ENCODE measurements at regions of chr22 and their contacts with region 1.

Region 1: DNA sequence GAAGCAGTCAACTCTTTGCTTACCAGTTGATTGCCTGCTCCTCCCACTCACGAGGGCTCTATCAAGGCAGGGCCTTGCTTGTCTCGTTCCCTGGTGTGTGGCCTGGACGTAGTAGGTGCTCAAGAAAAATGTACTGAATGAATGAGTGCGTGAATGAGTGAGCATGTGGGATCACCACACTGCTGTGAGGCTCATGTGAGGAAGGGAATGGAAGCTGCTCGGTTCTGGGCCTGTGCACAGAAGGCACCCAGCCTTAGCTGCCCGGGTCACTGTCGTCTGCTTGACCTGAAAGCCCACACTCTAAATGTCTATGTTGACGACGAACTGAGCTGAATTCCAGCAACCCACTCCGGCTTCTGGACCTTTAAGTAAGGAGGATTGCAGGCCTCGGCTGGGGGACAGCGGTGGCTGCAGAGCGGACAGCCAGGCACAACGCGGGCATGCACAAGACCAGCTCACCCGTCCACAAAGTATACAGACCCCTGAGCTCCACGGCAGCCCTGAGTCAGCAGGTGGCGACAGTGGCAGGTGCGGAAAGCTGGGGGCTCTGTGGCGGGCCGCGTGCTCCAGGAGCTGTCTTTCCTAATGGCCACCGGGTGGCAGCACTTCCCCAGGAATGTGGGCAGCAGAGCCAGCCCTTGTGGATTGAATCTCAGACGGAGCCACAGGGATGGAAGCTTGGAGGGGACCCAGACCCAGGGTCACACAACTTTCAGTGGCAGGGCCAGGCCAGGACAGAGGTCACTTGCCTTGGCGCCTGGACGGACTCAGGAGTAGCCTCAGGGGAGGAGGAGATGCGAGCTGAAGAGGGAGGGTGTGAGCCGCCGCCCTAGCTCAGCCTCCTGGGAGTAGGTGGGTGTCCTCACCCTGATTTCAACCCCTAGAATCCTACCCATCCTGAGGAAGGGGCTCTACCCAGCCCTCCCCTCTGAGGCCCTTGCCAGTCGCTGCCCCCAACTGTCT is 5.0 kb upstream of the PICK1 start:
- DNase-seq: peak; percentile 68 to 73 (median 71)
- H3K4me3 ChIP-seq: no peak overlapping the region
- H3K4me3 Mint-ChIP-seq: no peak overlapping the region
- H3K27ac ChIP-seq: no peak overlapping the region
- H3K27ac Mint-ChIP-seq: peak overlapping the region in 4 of 7 donors; percentile 18 to 82 (median 64)
- H3K4me1 ChIP-seq: peaks cover 10% of the 10 kb centered on the region
- H3K4me1 Mint-ChIP-seq: peaks cover 3 to 18% (median 11%) of the 10 kb centered on the region in 4 donors
- H3K27me3 ChIP-seq: no peaks in the 10 kb centered on the region
- H3K27me3 Mint-ChIP-seq: peaks cover 0 to 3% of the 10 kb centered on the region in 2 donors

Region 2: DNA sequence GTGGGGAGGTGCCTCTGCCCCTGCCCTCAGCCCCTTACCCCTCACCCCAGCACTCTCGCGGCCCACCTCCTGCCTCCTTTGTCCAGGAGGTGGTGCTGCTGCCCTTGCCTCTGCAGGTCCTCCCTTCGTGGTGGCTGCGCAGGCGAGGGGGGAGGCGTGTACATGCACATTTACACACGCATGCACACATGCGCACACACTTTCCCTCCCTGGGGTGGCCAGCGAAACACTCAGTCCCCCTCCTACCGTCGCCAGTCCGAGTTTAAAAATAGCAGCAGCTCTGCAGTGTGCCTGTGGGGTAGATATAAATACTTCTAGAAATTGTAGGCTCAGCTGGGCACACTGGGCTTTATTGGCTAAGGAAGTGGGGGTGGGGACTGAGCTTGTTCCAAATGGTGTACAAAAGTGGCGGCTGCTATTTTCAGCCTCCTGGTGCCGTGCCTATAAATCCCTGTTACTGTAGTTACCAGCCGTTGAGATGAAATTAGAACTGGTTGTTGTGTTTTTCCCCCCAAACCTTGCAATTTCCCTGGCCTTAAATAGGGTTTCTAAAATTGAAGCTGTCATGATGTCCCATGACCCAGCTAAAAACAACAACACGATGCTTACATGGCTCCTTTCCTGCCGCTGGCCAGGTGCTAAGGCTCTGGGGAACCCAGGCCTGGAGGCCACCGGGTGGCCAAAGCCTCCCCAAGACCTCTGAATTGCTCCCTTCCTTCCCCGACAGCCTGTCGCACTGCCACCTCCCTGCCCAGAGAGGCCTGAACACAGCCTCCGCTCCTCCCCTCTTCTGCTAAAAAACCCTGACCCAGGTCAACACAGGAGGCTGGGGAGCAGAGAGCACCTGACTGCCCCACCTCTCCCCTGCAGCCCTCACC is 17.4 kb after region 1 on chr22:
- CTCF ChIA-PET with region 1: interaction called, 19 read pairs
- POLR2A ChIA-PET with region 1: interaction called, 4 read pairs
- intact Hi-C with region 1: no loop called
- DNase-seq: no peak
- H3K4me3 ChIP-seq: no peak overlapping the region
- H3K4me3 Mint-ChIP-seq: no peak overlapping the region
- H3K27ac ChIP-seq: no peak overlapping the region
- H3K27ac Mint-ChIP-seq: no peak overlapping the region
- H3K4me1 ChIP-seq: no peaks in the 10 kb centered on the region
- H3K4me1 Mint-ChIP-seq: no peaks in the 10 kb centered on the region
- H3K27me3 ChIP-seq: no peaks in the 10 kb centered on the region
- H3K27me3 Mint-ChIP-seq: no peaks in the 10 kb centered on the region

Region 3: GRCh38 chr22:38080850-38081635 is 28.9 kb after region 1 on chr22:
- CTCF ChIA-PET with region 1: no interaction called
- POLR2A ChIA-PET with region 1: no interaction called
- intact Hi-C with region 1: no loop called
- DNase-seq: no peak
- H3K4me3 ChIP-seq: no peak overlapping the region
- H3K4me3 Mint-ChIP-seq: peak overlapping the region in 1 of 8 donors; percentile 6
- H3K27ac ChIP-seq: no peak overlapping the region
- H3K27ac Mint-ChIP-seq: no peak overlapping the region
- H3K4me1 ChIP-seq: peaks cover 14% of the 10 kb centered on the region
- H3K4me1 Mint-ChIP-seq: peaks cover 0 to 4% (median 0%) of the 10 kb centered on the region in 4 donors
- H3K27me3 ChIP-seq: peaks cover 14% of the 10 kb centered on the region
- H3K27me3 Mint-ChIP-seq: peaks cover 6 to 22% of the 10 kb centered on the region in 2 donors

Region 4: GRCh38 chr22:38656256-38657044 is 604.3 kb after region 1 on chr22 and contains the starts of genes CBY1 and FAM227A:
- CTCF ChIA-PET with region 1: no interaction called
- POLR2A ChIA-PET with region 1: no interaction called
- intact Hi-C with region 1: loop called (anchors 2 kb)
- DNase-seq: peak; percentile 85 to 92 (median 86)
- H3K4me3 ChIP-seq: peak within 1 kb of the TSS; percentile 90 to 98
- H3K4me3 Mint-ChIP-seq: peak within 1 kb of the TSS; percentile 93 to 99 (median 96)
- H3K27ac ChIP-seq: peak within 1 kb of the TSS; percentile 88
- H3K27ac Mint-ChIP-seq: peak within 1 kb of the TSS; percentile 98 to 100 (median 99)
- H3K4me1 ChIP-seq: peaks cover 16% of the 10 kb centered on the region
- H3K4me1 Mint-ChIP-seq: peaks cover 10 to 24% (median 19%) of the 10 kb centered on the region in 4 donors
- H3K27me3 ChIP-seq: no peaks in the 10 kb centered on the region
- H3K27me3 Mint-ChIP-seq: no peaks in the 10 kb centered on the region
- total RNA-seq, gene CBY1: 30.4 to 35.2 TPM
- total RNA-seq, gene FAM227A: 0.44 TPM in 1 of 2 experiments, not detected in the other